Right ventricle myocardium superior (tissue), 1 donor: ENCODE measurements at regions of chr2 and their contacts with region 1.

Region 1: DNA sequence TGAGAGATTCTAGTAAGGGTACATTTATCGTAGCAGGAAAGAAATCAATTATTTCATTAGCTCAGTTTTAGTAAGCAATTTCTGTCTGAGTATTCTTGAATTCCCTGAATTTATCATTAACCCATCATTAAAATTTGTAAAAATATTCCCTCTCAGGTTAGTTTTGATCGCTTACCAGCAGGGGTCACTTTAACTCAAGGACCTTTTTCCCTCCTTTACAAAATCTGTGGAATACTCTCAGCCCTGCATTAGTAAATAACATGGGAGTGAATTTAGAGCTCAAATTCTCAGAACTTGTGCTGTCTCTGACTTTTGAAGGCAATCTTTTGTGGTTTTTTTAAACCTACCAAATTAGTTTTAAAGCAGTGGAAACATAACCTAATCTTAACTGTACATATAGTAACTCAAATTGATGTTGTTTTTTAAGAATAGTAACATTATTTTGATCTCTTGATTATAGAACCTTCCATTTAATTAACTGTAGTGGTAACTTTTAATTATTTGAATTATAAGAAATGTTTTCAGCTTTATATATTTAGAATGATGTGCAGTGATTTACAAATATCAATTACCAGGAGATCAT is 97.2 kb downstream of the AGPS start:
- DNase-seq: no peak
- ATAC-seq: no peak

Region 2: DNA sequence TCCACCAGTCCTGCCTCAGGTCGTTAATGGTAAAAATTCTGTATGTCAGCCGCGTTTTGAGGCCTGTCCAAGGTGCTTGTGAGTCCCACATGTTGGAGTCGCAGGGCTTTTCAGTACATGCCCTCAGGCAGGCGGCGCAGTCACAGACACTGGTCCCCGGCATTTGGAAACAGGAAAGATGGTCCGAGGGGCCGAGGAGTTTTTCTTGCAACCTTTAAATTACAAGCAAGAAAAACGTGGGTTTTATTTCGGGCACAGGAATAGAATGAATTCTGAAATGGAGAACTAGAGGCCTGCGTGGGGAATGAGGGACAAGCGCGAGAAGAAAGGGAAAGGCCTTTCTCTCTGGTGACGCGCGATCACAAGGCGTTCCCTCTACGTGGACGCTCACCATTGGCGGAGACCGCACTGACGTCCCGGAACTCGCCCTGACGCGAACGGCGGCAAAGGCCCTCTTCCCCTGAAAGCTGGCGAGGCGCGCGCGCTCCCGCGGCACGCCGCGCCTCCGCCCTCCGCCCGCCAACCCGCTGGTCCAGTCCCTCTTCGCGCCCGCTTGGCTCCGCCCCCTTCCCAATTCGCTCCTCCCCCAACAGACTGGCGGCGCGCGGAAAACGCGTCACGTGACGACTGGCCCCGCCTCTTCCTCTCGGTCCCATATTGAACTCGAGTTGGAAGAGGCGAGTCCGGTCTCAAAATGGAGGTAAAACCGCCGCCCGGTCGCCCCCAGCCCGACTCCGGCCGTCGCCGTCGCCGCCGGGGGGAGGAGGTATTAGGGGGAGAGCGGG is 277.5 kb before region 1 on chr2 and contains the start of gene HNRNPA3:
- intact Hi-C with region 1: no loop called
- DNase-seq: peak; percentile 100
- ATAC-seq: peak; percentile 95
- total RNA-seq, gene HNRNPA3: 64.5 TPM

Region 3: GRCh38 chr2:177530561-177530960 is 40.8 kb after region 1 on chr2:
- intact Hi-C with region 1: no loop called
- DNase-seq: no peak
- ATAC-seq: no peak

Region 4: GRCh38 chr2:177572236-177572671 is 82.4 kb after region 1 on chr2:
- intact Hi-C with region 1: no loop called
- DNase-seq: no peak
- ATAC-seq: no peak

Region 5: GRCh38 chr2:177724398-177725287 is 234.8 kb after region 1 on chr2:
- intact Hi-C with region 1: loop called (anchors 10 kb)
- DNase-seq: peak; percentile 47
- ATAC-seq: peak; percentile 77

Region 6: GRCh38 chr2:177763532-177764265 is 273.9 kb after region 1 on chr2:
- intact Hi-C with region 1: loop called (anchors 10 kb)
- DNase-seq: peak; percentile 73
- ATAC-seq: peak; percentile 86